Left cardiac atrium (tissue), 4 donors: ENCODE measurements at regions of chr7 and their contacts with region 1.

Region 1: DNA sequence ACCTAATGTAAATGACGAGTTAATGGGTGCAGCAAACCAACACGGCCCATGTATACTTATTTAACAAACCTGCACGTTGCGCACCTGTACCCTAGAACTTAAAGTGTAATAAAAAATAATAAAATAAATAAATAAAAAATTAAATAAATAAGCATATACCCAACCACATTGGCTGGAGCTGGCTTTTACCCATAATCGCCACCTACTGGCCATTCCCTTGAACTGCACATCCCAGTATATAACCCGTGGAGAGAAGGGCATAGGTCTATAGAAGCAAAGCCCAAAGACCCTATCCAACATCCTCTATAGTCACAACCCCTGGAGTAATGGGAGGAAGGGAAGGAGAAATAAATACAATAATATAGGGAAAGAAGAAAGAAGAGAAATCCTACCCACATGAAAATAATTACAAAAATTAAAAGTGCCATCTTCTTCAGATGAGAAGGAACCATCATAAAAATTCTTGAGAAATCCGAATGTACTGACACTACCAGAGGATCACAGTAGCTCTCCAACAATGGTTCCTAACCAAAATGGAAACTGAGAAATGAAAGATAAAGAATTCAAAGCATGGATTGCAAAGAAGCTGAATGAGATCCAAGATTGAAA is 65.6 kb downstream of the TWIST1 start:
- DNase-seq: no peak
- ATAC-seq: no peak

Region 2: DNA sequence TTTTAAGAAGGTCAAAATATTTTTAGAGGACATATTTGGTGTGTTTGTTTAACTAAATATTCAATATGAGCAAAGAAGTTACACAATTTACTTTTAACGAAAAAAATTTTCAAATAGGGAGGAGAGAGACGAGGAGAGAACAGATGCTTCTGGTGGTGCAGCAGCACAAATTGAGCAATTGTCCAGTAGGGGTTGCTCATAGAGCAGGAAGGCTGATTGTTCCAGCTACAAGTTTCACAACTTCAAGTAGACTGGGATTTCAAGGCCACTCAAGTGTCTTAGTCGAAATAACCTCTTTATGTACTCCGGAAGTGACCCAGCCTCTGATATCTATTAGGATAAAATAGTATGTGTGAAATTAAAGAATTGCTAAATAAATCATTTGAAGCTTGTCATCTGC is 358.5 kb before region 1 on chr7:
- intact Hi-C with region 1: loop called in 1 of 2 experiments (anchors 10 kb)
- DNase-seq: no peak
- ATAC-seq: peak; percentile 71 to 73

Region 3: GRCh38 chr7:19144661-19145433 is 93.0 kb after region 1 on chr7 and contains the start of gene FERD3L:
- intact Hi-C with region 1: no loop called
- DNase-seq: peak; percentile 19
- ATAC-seq: peak; percentile 15 to 27
- total RNA-seq, gene FERD3L: not detected